ENCODE measurements at regions of chr2 and their contacts with region 1.

Region 1: GRCh38 chr2:237627441-237628246 is at the start of gene LRRFIP1:
- DNase-seq: no peak
- ATAC-seq: peak; percentile 72
- total RNA-seq, gene LRRFIP1: 104 TPM

Region 2: GRCh38 chr2:237650455-237650850 is 22.8 kb after region 1 on chr2:
- intact Hi-C with region 1: loop called (anchors 2 kb)
- DNase-seq: no peak
- ATAC-seq: no peak

Region 3: DNA sequence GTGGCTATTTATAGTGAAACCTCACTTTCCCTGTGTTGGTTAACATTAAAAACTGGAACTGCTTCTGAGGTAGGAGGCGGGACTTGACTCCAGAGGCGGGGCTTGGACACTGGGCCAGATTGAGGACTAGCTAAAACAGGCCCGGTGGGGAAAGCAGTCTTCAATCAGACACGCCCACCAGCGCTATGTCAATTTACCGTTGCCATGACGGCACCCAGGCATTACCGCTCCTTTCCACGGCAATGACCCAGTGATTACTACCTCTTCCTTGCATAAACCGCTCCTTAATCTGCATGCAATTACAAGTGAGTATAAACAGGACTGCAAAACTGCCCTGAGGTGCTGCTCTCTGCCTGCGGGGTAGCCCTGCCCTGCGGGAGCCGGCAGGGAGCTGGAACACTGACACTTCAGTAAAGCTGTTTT is 35.0 kb after region 1 on chr2:
- intact Hi-C with region 1: loop called (anchors 5 kb)
- DNase-seq: peak; percentile 93
- ATAC-seq: peak; percentile 90

Region 4: GRCh38 chr2:237691908-237692600 is 64.4 kb after region 1 on chr2:
- intact Hi-C with region 1: loop called (anchors 5 kb)
- DNase-seq: no peak
- ATAC-seq: peak; percentile 78

Region 5: DNA sequence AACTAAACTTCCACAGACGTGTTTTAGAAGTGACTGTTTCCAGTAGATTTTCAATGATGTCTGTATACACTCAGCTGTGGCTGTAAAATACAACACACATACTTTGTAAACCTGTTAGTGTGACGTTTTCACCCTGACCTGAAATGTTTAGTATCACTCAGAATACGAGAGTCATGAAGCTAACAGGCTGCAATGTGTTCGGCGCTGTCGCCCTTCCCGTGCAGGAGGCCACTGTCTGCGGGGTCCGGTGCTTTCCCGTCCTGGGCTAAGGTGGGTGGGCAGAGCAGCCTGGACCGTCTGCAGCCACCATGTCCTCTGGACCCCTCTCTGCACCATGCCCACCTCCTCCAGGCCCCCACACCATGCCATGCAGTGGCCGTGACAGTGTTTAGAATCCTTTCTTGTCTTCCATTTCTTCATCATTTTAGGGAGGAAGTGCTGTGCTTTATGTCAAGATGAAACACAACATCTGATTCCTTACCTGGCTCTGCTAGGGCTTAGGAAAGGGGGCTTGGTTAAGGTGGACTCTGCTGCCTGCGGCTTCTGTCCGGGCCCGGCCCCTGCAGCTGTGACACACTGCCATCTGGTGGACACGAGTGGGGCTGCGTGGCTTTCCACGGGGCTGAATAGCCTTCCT is 117.1 kb after region 1 on chr2:
- intact Hi-C with region 1: loop called (anchors 10 kb)
- DNase-seq: peak; percentile 89
- ATAC-seq: peak; percentile 79

Region 6: GRCh38 chr2:238053191-238053776 is 425.6 kb after region 1 on chr2:
- intact Hi-C with region 1: no loop called
- DNase-seq: no peak
- ATAC-seq: no peak

Measured in Right ventricle myocardium inferior (tissue), 1 donor.